CD4-positive, alpha-beta memory T cell (primary cell): ENCODE measurements at regions of chr15 and their contacts with region 1.

Region 1: GRCh38 chr15:101008158-101009139 is 89.3 kb downstream of the LRRK1 start:
- DNase-seq: peak; percentile 79 to 85 (median 81)
- H3K4me3 ChIP-seq: peak overlapping the region; percentile 53 to 70
- H3K4me3 Mint-ChIP-seq: peak overlapping the region; percentile 89 to 95 (median 91)
- H3K27ac ChIP-seq: no peak overlapping the region
- H3K27ac Mint-ChIP-seq: peak overlapping the region; percentile 22 to 80 (median 44)
- H3K4me1 ChIP-seq: peaks cover 14% of the 10 kb centered on the region
- H3K4me1 Mint-ChIP-seq: peaks cover 8 to 28% (median 16%) of the 10 kb centered on the region in 4 donors
- H3K27me3 ChIP-seq: no peaks in the 10 kb centered on the region
- H3K27me3 Mint-ChIP-seq: peaks cover 6 to 8% of the 10 kb centered on the region in 2 donors

Region 2: GRCh38 chr15:100349696-100350433 is 658.6 kb before region 1 on chr15:
- CTCF ChIA-PET with region 1: interaction called, 18 read pairs
- POLR2A ChIA-PET with region 1: no interaction called
- intact Hi-C with region 1: no loop called
- DNase-seq: peak; percentile 82 to 87 (median 83)
- H3K4me3 ChIP-seq: peak overlapping the region; percentile 70 to 98
- H3K4me3 Mint-ChIP-seq: peak overlapping the region; percentile 95 to 97 (median 96)
- H3K27ac ChIP-seq: peak overlapping the region; percentile 85
- H3K27ac Mint-ChIP-seq: peak overlapping the region; percentile 81 to 98 (median 93)
- H3K4me1 ChIP-seq: peaks cover 5% of the 10 kb centered on the region
- H3K4me1 Mint-ChIP-seq: peaks cover 6 to 18% (median 10%) of the 10 kb centered on the region in 4 donors
- H3K27me3 ChIP-seq: peaks cover 7% of the 10 kb centered on the region
- H3K27me3 Mint-ChIP-seq: peaks cover 13 to 24% of the 10 kb centered on the region in 2 donors

Region 3: GRCh38 chr15:100790786-100791265 is 217.6 kb before region 1 on chr15:
- CTCF ChIA-PET with region 1: no interaction called
- POLR2A ChIA-PET with region 1: no interaction called
- intact Hi-C with region 1: no loop called
- DNase-seq: no peak
- H3K4me3 ChIP-seq: no peak overlapping the region
- H3K4me3 Mint-ChIP-seq: no peak overlapping the region
- H3K27ac ChIP-seq: no peak overlapping the region
- H3K27ac Mint-ChIP-seq: peak overlapping the region in 1 of 7 donors; percentile 71
- H3K4me1 ChIP-seq: no peaks in the 10 kb centered on the region
- H3K4me1 Mint-ChIP-seq: no peaks in the 10 kb centered on the region
- H3K27me3 ChIP-seq: no peaks in the 10 kb centered on the region
- H3K27me3 Mint-ChIP-seq: peaks cover 4 to 13% of the 10 kb centered on the region in 2 donors

Region 4: GRCh38 chr15:100809151-100809550 is 199.3 kb before region 1 on chr15:
- CTCF ChIA-PET with region 1: no interaction called
- POLR2A ChIA-PET with region 1: no interaction called
- intact Hi-C with region 1: no loop called
- DNase-seq: no peak
- H3K4me3 ChIP-seq: no peak overlapping the region
- H3K4me3 Mint-ChIP-seq: no peak overlapping the region
- H3K27ac ChIP-seq: no peak overlapping the region
- H3K27ac Mint-ChIP-seq: no peak overlapping the region
- H3K4me1 ChIP-seq: no peaks in the 10 kb centered on the region
- H3K4me1 Mint-ChIP-seq: no peaks in the 10 kb centered on the region
- H3K27me3 ChIP-seq: no peaks in the 10 kb centered on the region
- H3K27me3 Mint-ChIP-seq: peaks cover 0 to 3% of the 10 kb centered on the region in 2 donors

Region 5: DNA sequence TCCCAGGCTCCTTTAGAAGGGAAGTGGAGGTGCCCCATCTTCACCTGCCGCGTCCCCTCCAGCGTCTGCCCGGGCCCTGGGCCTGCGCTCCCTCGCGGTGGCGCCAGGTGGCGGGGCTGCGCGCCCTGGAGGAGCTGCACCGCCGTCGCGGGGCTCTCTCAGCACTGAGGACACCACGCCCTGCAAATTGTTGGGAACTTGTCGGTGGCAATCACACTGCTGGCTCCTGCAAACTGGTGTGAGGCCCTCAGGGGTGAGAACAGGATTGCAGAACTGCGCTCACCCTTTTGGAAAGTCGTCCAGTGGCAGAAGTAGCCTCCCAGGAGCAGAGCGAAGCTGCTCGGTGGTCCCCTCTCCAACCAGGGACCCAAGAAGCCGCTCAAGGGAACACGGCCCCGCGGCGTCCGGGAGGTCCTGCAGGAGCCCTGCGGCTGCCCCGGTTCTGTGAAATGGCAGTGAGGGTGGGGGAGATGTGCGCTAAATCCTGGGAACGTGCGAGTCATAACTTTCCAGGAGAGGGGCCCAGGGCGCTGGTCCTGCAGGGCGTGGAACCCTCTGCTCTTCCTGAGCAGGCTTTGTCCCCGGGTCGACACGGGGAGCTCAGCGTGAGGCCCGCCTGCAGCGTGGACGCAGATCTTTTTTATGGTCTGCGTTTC is 90.3 kb before region 1 on chr15:
- CTCF ChIA-PET with region 1: interaction called, 74 read pairs
- POLR2A ChIA-PET with region 1: no interaction called
- intact Hi-C with region 1: loop called (anchors 1 kb)
- DNase-seq: peak in 4 of 5 donors; percentile 46 to 59 (median 50)
- H3K4me3 ChIP-seq: peak overlapping the region; percentile 23 to 38
- H3K4me3 Mint-ChIP-seq: peak overlapping the region; percentile 74 to 89 (median 84)
- H3K27ac ChIP-seq: no peak overlapping the region
- H3K27ac Mint-ChIP-seq: no peak overlapping the region
- H3K4me1 ChIP-seq: peaks cover 13% of the 10 kb centered on the region
- H3K4me1 Mint-ChIP-seq: peaks cover 7 to 22% (median 8%) of the 10 kb centered on the region in 4 donors
- H3K27me3 ChIP-seq: peaks cover 21% of the 10 kb centered on the region
- H3K27me3 Mint-ChIP-seq: peaks cover 46 to 47% of the 10 kb centered on the region in 2 donors

Region 6: DNA sequence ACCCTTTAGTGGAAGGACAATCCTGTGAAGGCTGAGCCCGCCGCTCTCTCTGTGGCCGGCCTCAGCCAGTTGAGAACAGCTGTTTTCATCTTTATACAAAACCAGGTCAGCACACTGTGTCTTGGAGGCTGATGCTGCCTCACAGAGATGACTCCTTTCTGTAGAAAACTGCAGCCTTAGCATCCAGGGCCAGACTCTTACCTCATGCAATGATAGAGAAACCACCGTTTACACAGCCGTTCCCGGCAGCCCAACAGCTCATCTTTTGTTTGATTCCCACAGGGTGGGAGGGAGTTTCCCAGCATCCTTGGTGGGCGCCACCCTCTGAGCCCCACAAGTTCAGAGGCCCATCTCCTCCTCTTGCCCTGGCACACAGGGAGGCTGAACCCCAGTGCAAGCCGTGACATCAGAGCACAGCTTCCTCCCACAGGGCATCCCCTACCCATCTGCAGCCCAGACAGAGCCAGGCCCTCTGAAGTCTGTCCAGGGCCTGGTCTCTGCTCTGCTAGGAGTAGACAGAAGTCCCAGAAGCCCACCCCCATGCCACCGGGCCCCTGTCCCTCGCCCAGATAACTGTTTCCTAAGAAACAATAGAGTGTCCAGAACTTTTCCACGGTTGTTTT is 15.7 kb after region 1 on chr15:
- CTCF ChIA-PET with region 1: interaction called, 64 read pairs
- POLR2A ChIA-PET with region 1: interaction called, 4 read pairs
- intact Hi-C with region 1: no loop called
- DNase-seq: no peak
- H3K4me3 ChIP-seq: no peak overlapping the region
- H3K4me3 Mint-ChIP-seq: no peak overlapping the region
- H3K27ac ChIP-seq: no peak overlapping the region
- H3K27ac Mint-ChIP-seq: peak overlapping the region in 1 of 7 donors; percentile 20
- H3K4me1 ChIP-seq: no peaks in the 10 kb centered on the region
- H3K4me1 Mint-ChIP-seq: no peaks in the 10 kb centered on the region
- H3K27me3 ChIP-seq: no peaks in the 10 kb centered on the region
- H3K27me3 Mint-ChIP-seq: peaks cover 0 to 4% of the 10 kb centered on the region in 2 donors

Region 7: GRCh38 chr15:101251830-101252820 is 243.7 kb after region 1 on chr15 and contains the start of gene CHSY1:
- CTCF ChIA-PET with region 1: interaction called, 17 read pairs
- POLR2A ChIA-PET with region 1: interaction called, 3 read pairs
- intact Hi-C with region 1: loop called (anchors 2 kb)
- DNase-seq: peak; percentile 81 to 90 (median 86)
- H3K4me3 ChIP-seq: peak within 1 kb of the TSS; percentile 30 to 66
- H3K4me3 Mint-ChIP-seq: peak within 1 kb of the TSS; percentile 94 to 96 (median 95)
- H3K27ac ChIP-seq: peak within 1 kb of the TSS; percentile 42
- H3K27ac Mint-ChIP-seq: peak within 1 kb of the TSS; percentile 90 to 95 (median 93)
- H3K4me1 ChIP-seq: peaks cover 39% of the 10 kb centered on the region
- H3K4me1 Mint-ChIP-seq: peaks cover 29 to 43% (median 31%) of the 10 kb centered on the region in 4 donors
- H3K27me3 ChIP-seq: no peaks in the 10 kb centered on the region
- H3K27me3 Mint-ChIP-seq: no peaks in the 10 kb centered on the region
- total RNA-seq, gene CHSY1: 11.1 to 11.9 TPM

Region 8: GRCh38 chr15:101269479-101270223 is 261.2 kb after region 1 on chr15:
- CTCF ChIA-PET with region 1: interaction called, 16 read pairs
- POLR2A ChIA-PET with region 1: no interaction called
- intact Hi-C with region 1: no loop called
- DNase-seq: no peak
- H3K4me3 ChIP-seq: no peak overlapping the region
- H3K4me3 Mint-ChIP-seq: no peak overlapping the region
- H3K27ac ChIP-seq: no peak overlapping the region
- H3K27ac Mint-ChIP-seq: peak overlapping the region in 3 of 7 donors; percentile 36 to 51 (median 43)
- H3K4me1 ChIP-seq: no peaks in the 10 kb centered on the region
- H3K4me1 Mint-ChIP-seq: peaks cover 0 to 6% (median 0%) of the 10 kb centered on the region in 4 donors
- H3K27me3 ChIP-seq: no peaks in the 10 kb centered on the region
- H3K27me3 Mint-ChIP-seq: no peaks in the 10 kb centered on the region

Region 9: DNA sequence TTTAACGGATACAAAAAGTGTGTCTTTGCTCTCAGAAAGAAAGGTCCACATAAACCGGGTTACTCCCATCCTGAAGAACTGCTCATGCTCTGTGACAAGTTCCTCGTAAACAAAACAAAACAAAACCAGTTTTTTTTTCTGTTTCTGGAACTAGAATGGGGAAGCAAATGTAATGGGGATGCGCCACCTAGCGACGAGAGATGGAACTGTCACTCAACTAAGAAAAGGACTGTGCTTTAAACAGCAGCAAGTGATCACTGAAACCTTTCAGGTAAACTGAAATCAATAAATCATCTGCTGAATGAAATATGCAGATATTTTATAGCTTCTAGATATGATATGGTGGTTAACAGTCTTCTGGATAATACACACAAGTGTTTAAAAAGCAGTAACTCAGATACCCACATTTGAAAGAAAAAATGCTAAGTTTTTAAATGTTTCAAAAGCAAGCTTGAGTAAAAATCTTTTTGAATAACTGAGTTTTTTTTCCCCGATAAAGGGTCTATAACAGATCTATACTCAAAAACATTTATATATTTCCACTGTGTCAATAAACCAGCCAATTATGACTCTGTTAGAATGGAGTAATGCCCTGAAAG is 632.8 kb after region 1 on chr15:
- CTCF ChIA-PET with region 1: no interaction called
- POLR2A ChIA-PET with region 1: no interaction called
- intact Hi-C with region 1: no loop called
- DNase-seq: peak; percentile 73 to 78 (median 77)
- H3K4me3 ChIP-seq: no peak overlapping the region
- H3K4me3 Mint-ChIP-seq: peak overlapping the region in 5 of 8 donors; percentile 4 to 52 (median 18)
- H3K27ac ChIP-seq: peak overlapping the region; percentile 67
- H3K27ac Mint-ChIP-seq: peak overlapping the region; percentile 80 to 95 (median 94)
- H3K4me1 ChIP-seq: peaks cover 25% of the 10 kb centered on the region
- H3K4me1 Mint-ChIP-seq: peaks cover 20 to 30% (median 25%) of the 10 kb centered on the region in 4 donors
- H3K27me3 ChIP-seq: no peaks in the 10 kb centered on the region
- H3K27me3 Mint-ChIP-seq: no peaks in the 10 kb centered on the region